ENCODE measurements at regions of chr3 and their contacts with region 1.

Region 1: GRCh38 chr3:107271787-107272387 is 105.4 kb upstream of the CCDC54 start:
- DNase-seq: no peak
- H3K4me3 ChIP-seq: no peak overlapping the region
- H3K27ac ChIP-seq: no peak overlapping the region
- H3K4me1 ChIP-seq: no peaks in the 10 kb centered on the region
- H3K27me3 ChIP-seq: no peaks in the 10 kb centered on the region; a peak in 1 of 7 replicates
- CTCF ChIP-seq: peak in 2 of 3 experiments; percentile 30 to 67; a peak in 2 of 4 replicates
- EP300 ChIP-seq: no peak
- POLR2A ChIP-seq: no peak
- RAD21 ChIP-seq: peak; percentile 71 to 78

Region 2: GRCh38 chr3:106058475-106058874 is 1213.4 kb before region 1 on chr3:
- CTCF ChIA-PET with region 1: no interaction called
- POLR2A ChIA-PET with region 1: no interaction called
- DNase-seq: no peak
- H3K4me3 ChIP-seq: no peak overlapping the region
- H3K27ac ChIP-seq: no peak overlapping the region
- H3K4me1 ChIP-seq: no peaks in the 10 kb centered on the region
- H3K27me3 ChIP-seq: no peaks in the 10 kb centered on the region
- CTCF ChIP-seq: no peak
- EP300 ChIP-seq: no peak
- POLR2A ChIP-seq: no peak
- RAD21 ChIP-seq: no peak

Region 3: GRCh38 chr3:107142786-107143575 is 128.9 kb before region 1 on chr3:
- CTCF ChIA-PET with region 1: no interaction called
- POLR2A ChIA-PET with region 1: no interaction called
- DNase-seq: no peak
- H3K4me3 ChIP-seq: no peak overlapping the region
- H3K27ac ChIP-seq: no peak overlapping the region
- H3K4me1 ChIP-seq: peaks cover 0 to 2% (median 0%) of the 10 kb centered on the region in 4 experiments; a peak in 1 of 7 replicates
- H3K27me3 ChIP-seq: no peaks in the 10 kb centered on the region
- CTCF ChIP-seq: no peak
- EP300 ChIP-seq: no peak
- POLR2A ChIP-seq: no peak
- RAD21 ChIP-seq: no peak; a peak in 1 of 4 replicates

Region 4: GRCh38 chr3:107153981-107154380 is 117.9 kb before region 1 on chr3:
- CTCF ChIA-PET with region 1: no interaction called
- POLR2A ChIA-PET with region 1: no interaction called
- DNase-seq: no peak
- H3K4me3 ChIP-seq: no peak overlapping the region
- H3K27ac ChIP-seq: no peak overlapping the region
- H3K4me1 ChIP-seq: no peaks in the 10 kb centered on the region
- H3K27me3 ChIP-seq: peaks cover 0 to 1% (median 0%) of the 10 kb centered on the region in 4 experiments; a peak in 2 of 7 replicates
- CTCF ChIP-seq: no peak
- EP300 ChIP-seq: no peak
- POLR2A ChIP-seq: no peak
- RAD21 ChIP-seq: no peak

Region 5: DNA sequence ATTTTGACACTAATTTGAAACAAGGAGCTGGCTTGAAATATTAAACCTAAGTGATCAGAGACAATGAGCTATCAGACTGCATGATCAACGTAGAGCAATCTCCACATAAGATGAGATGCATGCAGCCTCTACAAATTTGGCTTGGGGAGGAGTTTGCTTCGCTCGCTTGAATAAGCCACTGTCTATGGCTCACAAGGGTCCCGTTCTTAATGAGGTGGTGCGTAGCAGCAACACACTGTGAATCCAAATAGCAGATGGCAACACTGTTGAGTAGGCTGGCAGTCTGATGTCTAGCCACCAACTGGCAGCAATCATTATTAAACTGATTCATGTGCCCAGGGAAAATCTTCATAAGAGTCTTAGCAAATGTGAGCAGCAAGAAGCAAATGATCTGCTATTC is 20.1 kb before region 1 on chr3:
- CTCF ChIA-PET with region 1: interaction called, 14 read pairs
- POLR2A ChIA-PET with region 1: no interaction called
- DNase-seq: no peak
- H3K4me3 ChIP-seq: no peak overlapping the region
- H3K27ac ChIP-seq: no peak overlapping the region
- H3K4me1 ChIP-seq: no peaks in the 10 kb centered on the region
- H3K27me3 ChIP-seq: no peaks in the 10 kb centered on the region
- CTCF ChIP-seq: no peak
- EP300 ChIP-seq: no peak
- POLR2A ChIP-seq: no peak
- RAD21 ChIP-seq: no peak

Region 6: DNA sequence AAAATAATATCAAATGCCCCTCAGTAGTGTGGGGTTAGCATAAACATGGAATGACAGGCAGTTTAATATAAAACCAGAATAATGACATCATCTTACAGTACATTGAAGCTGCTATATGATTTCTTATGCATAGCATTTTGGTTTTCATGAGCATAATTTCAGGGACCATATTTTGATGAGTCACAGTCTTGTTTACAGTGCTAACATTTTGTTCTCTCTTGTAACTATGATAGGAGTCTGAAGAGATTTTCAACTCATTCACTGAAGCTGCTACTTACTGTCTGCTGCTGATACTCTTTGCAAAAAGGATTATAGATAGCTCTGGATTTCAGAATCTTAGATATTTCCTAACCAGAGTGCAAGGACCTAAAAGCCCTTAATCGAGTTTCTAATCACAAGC is 12.7 kb after region 1 on chr3:
- CTCF ChIA-PET with region 1: interaction called, 51 read pairs
- POLR2A ChIA-PET with region 1: no interaction called
- DNase-seq: no peak
- H3K4me3 ChIP-seq: no peak overlapping the region
- H3K27ac ChIP-seq: no peak overlapping the region
- H3K4me1 ChIP-seq: peaks cover 0 to 17% (median 8%) of the 10 kb centered on the region in 4 experiments; a peak in 6 of 7 replicates
- H3K27me3 ChIP-seq: no peaks in the 10 kb centered on the region
- CTCF ChIP-seq: no peak
- EP300 ChIP-seq: no peak
- POLR2A ChIP-seq: no peak
- RAD21 ChIP-seq: no peak

Region 7: DNA sequence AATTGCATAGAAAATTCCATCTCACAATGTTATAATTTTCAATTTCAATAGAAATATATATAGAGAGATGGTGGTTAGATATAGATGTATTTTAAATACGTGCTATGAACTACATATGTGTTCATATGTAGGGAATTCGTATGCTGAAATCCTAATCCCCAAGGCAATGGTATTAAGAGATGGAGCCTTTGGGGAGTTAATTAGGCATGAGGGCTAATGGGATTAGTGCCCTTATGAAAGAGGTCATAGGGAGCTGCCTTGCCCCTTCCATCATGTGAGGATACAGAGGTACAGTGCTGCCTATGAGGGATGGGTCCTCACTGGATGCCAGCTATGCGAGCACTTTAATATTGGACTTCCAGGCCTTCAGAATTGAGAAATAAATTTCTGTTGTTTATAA is 25.7 kb after region 1 on chr3:
- CTCF ChIA-PET with region 1: no interaction called
- POLR2A ChIA-PET with region 1: no interaction called
- DNase-seq: no peak
- H3K4me3 ChIP-seq: no peak overlapping the region
- H3K27ac ChIP-seq: no peak overlapping the region; the same call in 1 of the 2 replicates
- H3K4me1 ChIP-seq: no peaks in the 10 kb centered on the region
- H3K27me3 ChIP-seq: no peaks in the 10 kb centered on the region
- CTCF ChIP-seq: no peak
- EP300 ChIP-seq: no peak
- POLR2A ChIP-seq: no peak
- RAD21 ChIP-seq: no peak

Region 8: GRCh38 chr3:107421170-107421792 is 149.4 kb after region 1 on chr3:
- CTCF ChIA-PET with region 1: interaction called, 97 read pairs
- POLR2A ChIA-PET with region 1: no interaction called
- DNase-seq: no peak
- H3K4me3 ChIP-seq: no peak overlapping the region
- H3K27ac ChIP-seq: no peak overlapping the region
- H3K4me1 ChIP-seq: no peaks in the 10 kb centered on the region
- H3K27me3 ChIP-seq: no peaks in the 10 kb centered on the region
- CTCF ChIP-seq: peak in 2 of 3 experiments; percentile 54 to 64; a peak in 3 of 4 replicates
- EP300 ChIP-seq: no peak
- POLR2A ChIP-seq: no peak
- RAD21 ChIP-seq: peak; percentile 59 to 69

Region 9: DNA sequence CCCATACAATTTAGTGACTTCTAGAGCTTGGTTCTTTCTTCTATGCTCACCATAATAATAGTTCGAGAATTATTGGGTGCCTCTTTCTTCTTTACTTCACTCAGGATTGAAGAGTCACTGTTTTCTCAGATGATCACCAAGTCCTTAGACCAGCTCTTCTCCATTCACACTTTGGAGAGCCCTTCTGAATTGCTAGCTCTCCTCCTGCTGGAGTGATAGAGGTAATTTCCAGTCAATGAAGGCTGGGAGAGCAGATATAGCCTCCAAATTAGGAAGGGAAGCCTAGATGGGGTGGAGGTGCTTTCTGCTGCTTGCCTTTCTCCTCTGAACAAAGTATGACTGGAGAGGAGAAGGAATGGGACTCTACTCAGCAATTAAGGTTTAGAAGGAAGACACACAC is 240.2 kb after region 1 on chr3:
- CTCF ChIA-PET with region 1: interaction called, 14 read pairs
- POLR2A ChIA-PET with region 1: no interaction called
- DNase-seq: no peak
- H3K4me3 ChIP-seq: no peak overlapping the region
- H3K27ac ChIP-seq: no peak overlapping the region
- H3K4me1 ChIP-seq: no peaks in the 10 kb centered on the region
- H3K27me3 ChIP-seq: no peaks in the 10 kb centered on the region
- CTCF ChIP-seq: peak in 2 of 3 experiments; percentile 27; a peak in 2 of 4 replicates
- EP300 ChIP-seq: no peak
- POLR2A ChIP-seq: no peak
- RAD21 ChIP-seq: peak; percentile 52 to 57

Measured in H1 (cell line).